Caco-2 (cell line): ENCODE measurements at regions of chr12 and their contacts with region 1.

Region 1: GRCh38 chr12:50763639-50764285 is at the start of gene ATF1:
- DNase-seq: peak; percentile 94 to 95
- H3K4me3 ChIP-seq: peak within 1 kb of the TSS; percentile 75
- H3K4me3 Mint-ChIP-seq: peak within 1 kb of the TSS; percentile 83
- H3K27ac Mint-ChIP-seq: peak within 1 kb of the TSS; percentile 95
- H3K4me1 ChIP-seq: peaks cover 22% of the 10 kb centered on the region
- H3K4me1 Mint-ChIP-seq: peaks cover 27% of the 10 kb centered on the region
- H3K27me3 ChIP-seq: no peaks in the 10 kb centered on the region
- H3K27me3 Mint-ChIP-seq: no peaks in the 10 kb centered on the region
- CTCF ChIP-seq: no peak
- total RNA-seq, gene ATF1: 47.0 and 54.4 TPM in 2 replicates

Region 2: GRCh38 chr12:50778663-50779590 is 15.2 kb after region 1 on chr12:
- CTCF ChIA-PET with region 1: interaction called, 13 read pairs
- POLR2A ChIA-PET with region 1: interaction called, 3 read pairs
- intact Hi-C with region 1: no loop called
- DNase-seq: no peak
- H3K4me3 ChIP-seq: no peak overlapping the region
- H3K4me3 Mint-ChIP-seq: no peak overlapping the region
- H3K27ac Mint-ChIP-seq: peak overlapping the region; percentile 26
- H3K4me1 ChIP-seq: 0 out of 2 replicates have a peak, but pooled peaks cover 3% of the 10 kb centered on the region
- H3K4me1 Mint-ChIP-seq: peaks cover 12% of the 10 kb centered on the region
- H3K27me3 ChIP-seq: no peaks in the 10 kb centered on the region
- H3K27me3 Mint-ChIP-seq: no peaks in the 10 kb centered on the region
- CTCF ChIP-seq: no peak

Region 3: GRCh38 chr12:50786498-50787231 is 22.9 kb after region 1 on chr12:
- CTCF ChIA-PET with region 1: interaction called, 14 read pairs
- POLR2A ChIA-PET with region 1: interaction called, 9 read pairs
- intact Hi-C with region 1: loop called (anchors 1 kb)
- DNase-seq: peak; percentile 83 to 85
- H3K4me3 ChIP-seq: no peak overlapping the region
- H3K4me3 Mint-ChIP-seq: peak overlapping the region; percentile 37
- H3K27ac Mint-ChIP-seq: peak overlapping the region; percentile 98
- H3K4me1 ChIP-seq: peaks cover 32% of the 10 kb centered on the region
- H3K4me1 Mint-ChIP-seq: peaks cover 59% of the 10 kb centered on the region
- H3K27me3 ChIP-seq: no peaks in the 10 kb centered on the region
- H3K27me3 Mint-ChIP-seq: no peaks in the 10 kb centered on the region
- CTCF ChIP-seq: no peak

Region 4: DNA sequence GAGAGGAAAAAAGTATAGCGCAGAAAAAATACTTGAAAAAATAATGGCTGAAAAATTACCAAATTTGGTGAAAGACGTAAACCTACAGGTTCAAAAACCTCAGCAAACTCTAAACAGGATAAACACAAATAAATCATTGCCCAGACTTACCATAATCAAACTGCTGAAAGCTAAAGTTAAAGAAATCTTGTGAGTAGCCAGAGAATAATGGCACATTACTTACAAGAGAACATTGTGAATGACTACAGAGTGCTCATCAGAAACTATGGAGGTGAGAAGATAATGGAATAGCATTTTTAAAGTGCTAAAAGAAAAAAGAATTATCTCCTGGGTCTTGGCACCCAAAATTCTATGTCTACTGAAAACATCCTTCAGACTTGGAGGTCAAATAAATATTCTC is 36.1 kb after region 1 on chr12:
- CTCF ChIA-PET with region 1: no interaction called
- POLR2A ChIA-PET with region 1: no interaction called
- intact Hi-C with region 1: loop called (anchors 1 kb)
- DNase-seq: no peak
- H3K4me3 ChIP-seq: no peak overlapping the region
- H3K4me3 Mint-ChIP-seq: no peak overlapping the region
- H3K27ac Mint-ChIP-seq: no peak overlapping the region
- H3K4me1 ChIP-seq: no peaks in the 10 kb centered on the region
- H3K4me1 Mint-ChIP-seq: no peaks in the 10 kb centered on the region
- H3K27me3 ChIP-seq: no peaks in the 10 kb centered on the region
- H3K27me3 Mint-ChIP-seq: no peaks in the 10 kb centered on the region
- CTCF ChIP-seq: no peak

Region 5: GRCh38 chr12:50825372-50825838 is 61.6 kb after region 1 on chr12:
- CTCF ChIA-PET with region 1: interaction called, 19 read pairs
- POLR2A ChIA-PET with region 1: no interaction called
- intact Hi-C with region 1: loop called (anchors 1 kb)
- DNase-seq: peak in 1 of 2 experiments; percentile 51
- H3K4me3 ChIP-seq: no peak overlapping the region
- H3K4me3 Mint-ChIP-seq: peak overlapping the region; percentile 10
- H3K27ac Mint-ChIP-seq: peak overlapping the region; percentile 9
- H3K4me1 ChIP-seq: no peaks in the 10 kb centered on the region
- H3K4me1 Mint-ChIP-seq: no peaks in the 10 kb centered on the region
- H3K27me3 ChIP-seq: no peaks in the 10 kb centered on the region
- H3K27me3 Mint-ChIP-seq: no peaks in the 10 kb centered on the region
- CTCF ChIP-seq: peak; percentile 46 to 57